Prostate gland (tissue), 2 donors: ENCODE measurements at regions of chr11 and their contacts with region 1.

Region 1: DNA sequence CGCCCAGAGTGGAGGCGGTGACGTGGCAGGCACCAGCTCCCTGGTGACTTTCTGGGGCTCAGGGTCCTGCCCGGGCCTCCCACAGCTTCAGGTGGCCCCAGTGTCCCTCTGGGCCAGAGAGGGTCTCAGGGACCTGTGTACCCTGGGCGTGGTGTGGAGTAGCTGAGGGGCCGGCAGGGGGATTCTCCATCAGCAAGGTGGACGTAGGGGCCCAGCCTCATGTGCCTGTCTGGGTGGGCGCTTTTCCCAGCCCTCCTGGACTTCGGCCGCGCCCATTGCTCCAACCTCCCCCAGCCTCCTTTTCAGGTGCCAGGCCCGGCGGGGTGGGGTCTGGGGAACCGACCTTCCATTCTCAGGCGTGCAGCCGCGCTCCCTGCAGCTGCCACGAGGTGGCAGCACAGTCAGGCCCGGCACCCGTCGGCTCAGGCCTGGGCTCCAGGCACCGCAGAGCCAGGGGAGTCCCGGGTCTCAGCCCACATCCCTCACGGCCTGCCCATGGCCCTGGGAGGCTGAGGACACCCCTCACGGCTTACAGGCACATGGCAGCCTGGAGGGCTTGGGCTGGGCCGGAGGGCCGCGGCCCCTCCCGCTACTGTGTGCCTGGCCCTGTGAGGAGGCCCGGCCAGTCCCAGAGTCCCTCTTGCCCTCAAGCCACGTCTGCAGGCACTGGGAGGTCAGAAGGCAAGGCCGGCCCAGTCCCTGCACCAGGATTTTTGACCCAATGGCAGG is 19.9 kb upstream of the MUC5B start:
- DNase-seq: peak; percentile 38
- H3K4me3 ChIP-seq: no peak overlapping the region
- H3K27ac ChIP-seq: no peak overlapping the region
- H3K4me1 ChIP-seq: peaks cover 10% of the 10 kb centered on the region
- H3K27me3 ChIP-seq: no peaks in the 10 kb centered on the region
- CTCF ChIP-seq: peak; percentile 70 to 91 (median 86)
- POLR2A ChIP-seq: no peak

Region 2: GRCh38 chr11:1581976-1582375 is 379.0 kb after region 1 on chr11:
- intact Hi-C with region 1: loop called (anchors 5 kb)
- DNase-seq: no peak
- H3K4me3 ChIP-seq: no peak overlapping the region
- H3K27ac ChIP-seq: no peak overlapping the region
- H3K4me1 ChIP-seq: no peaks in the 10 kb centered on the region
- H3K27me3 ChIP-seq: peaks cover 2% of the 10 kb centered on the region
- CTCF ChIP-seq: no peak
- POLR2A ChIP-seq: no peak